Activated CD8-positive, alpha-beta T cell treated with anti-CD3 and anti-CD28 coated beads for 36 hours (primary cell): ENCODE measurements at regions of chr6 and their contacts with region 1.

Region 1: GRCh38 chr6:26216356-26216885 is 129.2 kb downstream of the HFE start:
- DNase-seq: peak; percentile 87
- ATAC-seq: peak; percentile 80
- H3K4me3 Mint-ChIP-seq: no peak overlapping the region
- H3K27ac Mint-ChIP-seq: no peak overlapping the region
- H3K4me1 Mint-ChIP-seq: peaks cover 11% of the 10 kb centered on the region
- H3K27me3 Mint-ChIP-seq: no peaks in the 10 kb centered on the region
- CTCF ChIP-seq: no peak

Region 2: GRCh38 chr6:26045065-26045927 is 171.1 kb before region 1 on chr6:
- CTCF ChIA-PET with region 1: no interaction called
- POLR2A ChIA-PET with region 1: interaction called, 16 read pairs
- intact Hi-C with region 1: no loop called
- DNase-seq: peak; percentile 85
- ATAC-seq: peak; percentile 63
- H3K4me3 Mint-ChIP-seq: peak overlapping the region; percentile 76
- H3K27ac Mint-ChIP-seq: peak overlapping the region; percentile 96
- H3K4me1 Mint-ChIP-seq: peaks cover 10% of the 10 kb centered on the region
- H3K27me3 Mint-ChIP-seq: no peaks in the 10 kb centered on the region
- CTCF ChIP-seq: no peak

Region 3: GRCh38 chr6:26175428-26176181 is 40.8 kb before region 1 on chr6:
- CTCF ChIA-PET with region 1: interaction called, 9 read pairs
- POLR2A ChIA-PET with region 1: interaction called, 23 read pairs
- intact Hi-C with region 1: no loop called
- DNase-seq: peak; percentile 72
- ATAC-seq: peak; percentile 17
- H3K4me3 Mint-ChIP-seq: peak overlapping the region; percentile 46
- H3K27ac Mint-ChIP-seq: peak overlapping the region; percentile 63
- H3K4me1 Mint-ChIP-seq: peaks cover 38% of the 10 kb centered on the region
- H3K27me3 Mint-ChIP-seq: no peaks in the 10 kb centered on the region
- CTCF ChIP-seq: peak; percentile 86

Region 4: DNA sequence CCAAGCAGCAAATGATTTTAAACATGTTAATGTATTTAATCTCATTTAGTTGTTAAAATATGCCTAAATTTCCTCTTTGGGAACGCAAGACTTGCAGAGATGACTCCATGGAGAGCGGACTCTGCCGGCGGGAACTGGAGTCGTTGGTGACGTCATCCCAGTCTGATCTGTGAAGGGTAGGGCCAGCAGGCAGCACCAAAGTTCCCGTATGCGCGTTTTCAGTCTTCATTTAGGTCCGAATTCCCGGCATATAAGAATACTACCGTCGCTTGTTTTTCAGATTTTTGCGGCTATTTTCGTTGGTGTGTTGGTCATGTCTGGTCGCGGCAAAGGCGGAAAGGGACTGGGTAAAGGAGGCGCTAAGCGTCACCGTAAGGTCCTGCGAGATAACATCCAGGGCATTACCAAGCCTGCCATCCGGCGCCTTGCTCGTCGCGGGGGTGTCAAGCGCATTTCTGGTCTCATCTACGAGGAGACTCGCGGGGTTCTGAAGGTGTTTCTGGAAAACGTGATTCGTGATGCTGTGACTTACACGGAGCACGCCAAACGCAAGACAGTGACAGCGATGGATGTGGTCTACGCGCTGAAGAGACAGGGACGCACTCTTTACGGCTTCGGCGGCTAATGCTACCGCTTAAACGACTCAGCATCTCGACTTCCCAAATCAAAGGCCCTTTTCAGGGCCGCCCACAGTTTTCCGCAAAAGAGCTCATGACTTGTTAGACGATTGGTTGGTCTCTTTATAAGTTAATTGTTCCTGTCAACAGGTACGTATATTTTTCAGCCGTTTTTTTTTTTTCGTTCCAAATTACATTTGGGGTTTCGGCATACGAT is 11.9 kb before region 1 on chr6:
- CTCF ChIA-PET with region 1: interaction called, 13 read pairs
- POLR2A ChIA-PET with region 1: interaction called, 883 read pairs
- intact Hi-C with region 1: loop called (anchors 1 kb)
- DNase-seq: peak; percentile 91
- ATAC-seq: peak; percentile 75
- H3K4me3 Mint-ChIP-seq: no peak overlapping the region
- H3K27ac Mint-ChIP-seq: no peak overlapping the region
- H3K4me1 Mint-ChIP-seq: peaks cover 17% of the 10 kb centered on the region
- H3K27me3 Mint-ChIP-seq: no peaks in the 10 kb centered on the region
- CTCF ChIP-seq: no peak

Region 5: DNA sequence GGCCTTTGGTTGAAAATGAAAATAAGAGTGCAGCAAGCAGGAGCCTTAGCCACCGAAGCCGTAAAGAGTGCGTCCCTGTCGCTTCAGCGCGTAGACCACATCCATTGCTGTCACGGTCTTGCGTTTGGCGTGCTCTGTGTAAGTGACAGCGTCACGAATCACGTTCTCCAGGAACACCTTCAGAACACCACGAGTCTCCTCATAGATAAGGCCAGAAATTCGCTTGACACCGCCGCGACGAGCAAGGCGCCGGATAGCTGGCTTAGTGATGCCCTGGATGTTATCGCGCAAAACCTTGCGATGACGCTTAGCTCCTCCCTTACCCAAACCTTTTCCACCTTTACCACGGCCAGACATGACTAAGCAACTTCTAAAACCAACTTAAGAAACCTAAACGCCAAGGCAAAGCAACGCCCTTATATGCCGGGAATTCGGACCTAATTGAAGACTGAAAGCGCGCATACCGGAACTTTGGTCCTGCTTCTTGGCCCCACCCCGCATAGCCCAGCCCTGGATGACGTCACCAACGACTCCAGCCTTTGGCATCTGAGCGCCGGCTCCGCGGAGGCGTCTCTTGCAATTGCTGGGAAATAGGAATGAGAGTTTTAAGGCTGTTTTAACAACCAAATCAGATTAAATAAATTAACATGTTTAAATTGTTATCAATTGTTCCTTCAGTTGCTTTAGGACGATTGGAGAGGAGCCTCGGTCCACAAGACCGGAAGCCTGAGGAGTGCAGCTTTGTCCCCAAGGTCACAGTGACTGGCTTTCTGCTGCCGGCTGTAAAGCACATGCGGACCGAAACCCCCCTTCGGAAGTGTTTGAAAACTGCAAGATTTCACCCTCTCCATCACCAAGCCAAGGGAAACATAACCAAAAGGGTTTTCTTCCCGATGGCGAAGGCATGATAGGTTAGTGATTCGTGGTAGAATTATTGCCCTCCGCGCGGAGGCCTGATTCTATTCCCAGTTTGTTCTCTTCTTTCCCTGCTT is 69.0 kb after region 1 on chr6:
- CTCF ChIA-PET with region 1: no interaction called
- POLR2A ChIA-PET with region 1: interaction called, 37 read pairs
- intact Hi-C with region 1: no loop called
- DNase-seq: peak; percentile 99
- ATAC-seq: peak; percentile 79
- H3K4me3 Mint-ChIP-seq: peak overlapping the region; percentile 88
- H3K27ac Mint-ChIP-seq: peak overlapping the region; percentile 100
- H3K4me1 Mint-ChIP-seq: peaks cover 15% of the 10 kb centered on the region
- H3K27me3 Mint-ChIP-seq: peaks cover 2% of the 10 kb centered on the region
- CTCF ChIP-seq: no peak